ENCODE measurements at regions of chr2 and their contacts with region 1.

Region 1: DNA sequence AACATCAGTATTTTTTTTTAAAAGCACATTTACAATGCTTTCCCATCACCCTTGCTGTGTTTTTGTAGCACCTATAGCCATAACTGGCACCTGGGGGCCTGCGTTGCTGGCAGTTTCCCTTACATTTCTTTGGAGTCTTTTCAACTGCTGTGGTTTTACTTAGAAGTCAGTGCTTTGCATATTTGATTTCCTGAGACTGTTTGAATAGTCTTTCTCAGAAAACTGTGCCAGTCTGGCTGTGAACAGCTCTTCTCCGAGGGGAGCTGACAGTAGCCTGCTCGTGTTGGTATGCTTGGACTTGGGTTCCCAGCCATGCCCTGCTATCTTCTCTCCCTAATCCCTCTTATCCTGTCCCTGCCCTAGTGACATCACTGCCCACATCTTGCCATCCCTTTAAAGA is 81.5 kb downstream of the DPP4 start:
- DNase-seq: peak in 8 of 9 donors; percentile 52 to 78 (median 72)
- ATAC-seq: peak; percentile 86
- H3K4me3 ChIP-seq: peak overlapping the region; percentile 46
- H3K4me3 Mint-ChIP-seq: peak overlapping the region; percentile 80 to 91 (median 86)
- H3K27ac ChIP-seq: peak overlapping the region; percentile 68
- H3K27ac Mint-ChIP-seq: peak overlapping the region; percentile 91 to 100 (median 97)
- H3K4me1 ChIP-seq: peaks cover 26 to 51% of the 10 kb centered on the region in 2 donors
- H3K4me1 Mint-ChIP-seq: peaks cover 35 to 78% (median 66%) of the 10 kb centered on the region in 7 donors
- H3K27me3 ChIP-seq: no peaks in the 10 kb centered on the region
- H3K27me3 Mint-ChIP-seq: no peaks in the 10 kb centered on the region

Region 2: DNA sequence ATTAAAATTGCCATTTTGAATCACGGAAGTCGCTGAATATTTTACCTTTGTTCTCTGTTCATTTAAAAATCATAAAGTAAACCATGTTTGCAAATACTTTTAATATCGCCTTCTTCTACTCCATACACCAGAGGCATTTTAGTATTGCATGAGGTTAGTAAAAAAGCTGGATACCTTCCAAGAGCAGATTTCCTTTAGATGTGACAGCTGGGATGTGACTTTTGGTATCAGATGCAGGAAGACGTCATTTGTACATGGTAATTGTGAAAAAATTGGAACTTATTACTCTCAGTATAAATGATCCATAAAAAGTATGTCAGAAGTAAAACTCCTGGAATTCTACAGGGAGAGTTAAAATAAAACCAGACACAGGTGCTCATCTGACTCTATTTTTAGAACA is 278.8 kb before region 1 on chr2:
- CTCF ChIA-PET with region 1: no interaction called
- POLR2A ChIA-PET with region 1: no interaction called
- intact Hi-C with region 1: no loop called
- DNase-seq: no peak
- ATAC-seq: no peak
- H3K4me3 ChIP-seq: no peak overlapping the region
- H3K4me3 Mint-ChIP-seq: no peak overlapping the region
- H3K27ac ChIP-seq: no peak overlapping the region
- H3K27ac Mint-ChIP-seq: no peak overlapping the region
- H3K4me1 ChIP-seq: peaks cover 0 to under 1% of the 10 kb centered on the region in 2 donors
- H3K4me1 Mint-ChIP-seq: peaks cover 0 to 4% (median 3%) of the 10 kb centered on the region in 7 donors
- H3K27me3 ChIP-seq: no peaks in the 10 kb centered on the region
- H3K27me3 Mint-ChIP-seq: peaks cover 4 to 21% (median 6%) of the 10 kb centered on the region in 5 donors

Region 3: DNA sequence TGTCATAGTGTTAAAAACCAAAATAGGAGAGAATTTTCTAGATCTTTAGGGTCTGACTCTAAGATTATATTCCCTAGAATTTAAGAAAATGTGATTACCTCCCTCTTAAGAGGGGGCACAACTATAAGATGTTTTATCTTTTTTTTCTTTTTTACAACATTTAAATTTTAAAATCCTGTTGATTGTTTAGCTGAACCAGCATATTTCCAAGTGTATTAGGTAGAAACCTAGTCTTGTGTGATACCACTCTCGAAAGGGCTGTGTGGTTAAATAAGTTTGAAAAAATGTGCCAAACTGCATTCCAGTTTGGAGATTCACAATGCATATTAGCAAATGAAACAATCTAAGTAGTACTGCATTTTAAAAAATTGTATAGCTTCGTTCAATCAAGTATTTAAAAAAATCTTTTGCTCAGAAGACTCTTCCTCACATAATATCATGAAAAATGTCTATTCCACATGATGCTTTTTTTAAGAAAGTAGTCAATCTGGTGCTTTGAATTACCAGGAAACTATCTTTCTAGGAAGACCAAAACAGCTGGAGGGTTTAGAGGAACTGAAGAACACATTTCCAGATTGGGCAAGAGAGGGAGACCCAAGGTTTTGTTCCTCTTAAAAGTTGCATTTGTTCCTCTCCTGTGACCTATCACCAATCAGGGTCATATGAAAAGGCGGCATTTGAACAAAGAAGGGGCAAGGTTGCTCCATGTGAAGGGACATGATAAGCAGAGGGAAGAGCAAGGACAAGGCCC is 17.3 kb before region 1 on chr2:
- CTCF ChIA-PET with region 1: no interaction called
- POLR2A ChIA-PET with region 1: no interaction called
- intact Hi-C with region 1: loop called in 1 of 2 experiments (anchors 2 kb)
- DNase-seq: no peak
- ATAC-seq: no peak
- H3K4me3 ChIP-seq: no peak overlapping the region
- H3K4me3 Mint-ChIP-seq: peak overlapping the region in 1 of 10 donors; percentile 39
- H3K27ac ChIP-seq: no peak overlapping the region
- H3K27ac Mint-ChIP-seq: peak overlapping the region in 2 of 9 donors; percentile 27 to 88
- H3K4me1 ChIP-seq: peaks cover 4 to 7% of the 10 kb centered on the region in 2 donors
- H3K4me1 Mint-ChIP-seq: peaks cover 4 to 63% (median 13%) of the 10 kb centered on the region in 7 donors
- H3K27me3 ChIP-seq: no peaks in the 10 kb centered on the region
- H3K27me3 Mint-ChIP-seq: no peaks in the 10 kb centered on the region

Region 4: GRCh38 chr2:161981679-161982250 is 10.8 kb before region 1 on chr2:
- CTCF ChIA-PET with region 1: no interaction called
- POLR2A ChIA-PET with region 1: no interaction called
- intact Hi-C with region 1: loop called (anchors 1 to 2 kb)
- DNase-seq: no peak
- ATAC-seq: no peak
- H3K4me3 ChIP-seq: no peak overlapping the region
- H3K4me3 Mint-ChIP-seq: no peak overlapping the region
- H3K27ac ChIP-seq: no peak overlapping the region
- H3K27ac Mint-ChIP-seq: peak overlapping the region in 2 of 9 donors; percentile 43 to 79
- H3K4me1 ChIP-seq: peaks cover 4 to 7% of the 10 kb centered on the region in 2 donors
- H3K4me1 Mint-ChIP-seq: peaks cover 1 to 58% (median 5%) of the 10 kb centered on the region in 7 donors
- H3K27me3 ChIP-seq: no peaks in the 10 kb centered on the region
- H3K27me3 Mint-ChIP-seq: peaks cover 0 to 4% (median 0%) of the 10 kb centered on the region in 5 donors

Region 5: DNA sequence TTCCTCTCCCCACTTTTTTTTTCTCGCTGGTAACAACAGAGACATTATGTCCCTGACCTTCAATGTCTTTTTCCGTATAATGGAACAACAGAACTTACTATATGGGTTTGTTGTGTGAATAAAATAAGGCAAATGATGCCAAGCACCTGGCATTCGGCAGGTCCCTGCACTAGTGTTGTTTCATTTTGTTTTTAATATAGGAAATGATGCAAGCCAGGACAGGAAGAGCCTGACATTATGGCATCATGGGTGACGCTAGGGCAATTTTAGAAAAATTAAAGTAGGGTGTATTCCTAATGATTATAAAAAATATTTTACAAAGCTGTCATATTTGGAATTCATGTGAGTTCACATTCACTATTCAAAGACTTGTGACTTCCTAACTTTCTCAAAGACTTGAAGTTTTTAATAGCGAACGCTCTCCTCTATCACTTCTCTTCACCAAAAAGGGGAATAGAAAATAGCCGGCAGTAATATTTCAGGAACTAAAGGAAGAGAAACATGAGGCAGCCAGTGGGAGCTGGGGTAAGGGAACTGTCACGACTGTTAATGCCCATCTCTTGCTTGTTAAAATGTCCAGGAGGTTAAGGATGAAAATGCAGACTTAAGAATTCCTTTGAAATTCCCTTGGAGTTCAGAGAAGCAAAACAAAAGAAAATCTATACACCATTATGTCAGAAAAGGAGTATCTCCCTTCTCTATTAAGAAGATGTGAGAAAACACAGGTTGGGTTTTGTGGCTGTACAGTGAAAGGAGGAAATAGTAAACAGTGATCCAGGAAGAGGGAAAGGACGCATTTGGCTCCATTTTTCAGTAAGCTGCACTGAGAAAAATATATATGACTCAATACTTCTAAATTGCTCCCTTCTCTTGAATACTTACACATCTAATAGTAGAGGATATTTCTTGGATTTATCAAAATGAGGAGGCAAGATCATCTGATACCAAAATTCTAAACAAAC is 21.3 kb after region 1 on chr2:
- CTCF ChIA-PET with region 1: interaction called, 7 read pairs
- POLR2A ChIA-PET with region 1: interaction called, 16 read pairs
- intact Hi-C with region 1: loop called (anchors 1 kb)
- DNase-seq: peak in 7 of 9 donors; percentile 30 to 71 (median 55)
- ATAC-seq: peak; percentile 36
- H3K4me3 ChIP-seq: peak overlapping the region; percentile 11
- H3K4me3 Mint-ChIP-seq: peak overlapping the region; percentile 52 to 86 (median 70)
- H3K27ac ChIP-seq: peak overlapping the region; percentile 95
- H3K27ac Mint-ChIP-seq: peak overlapping the region; percentile 94 to 99 (median 98)
- H3K4me1 ChIP-seq: peaks cover 47 to 72% of the 10 kb centered on the region in 2 donors
- H3K4me1 Mint-ChIP-seq: peaks cover 41 to 86% (median 81%) of the 10 kb centered on the region in 7 donors
- H3K27me3 ChIP-seq: no peaks in the 10 kb centered on the region
- H3K27me3 Mint-ChIP-seq: no peaks in the 10 kb centered on the region

Region 6: DNA sequence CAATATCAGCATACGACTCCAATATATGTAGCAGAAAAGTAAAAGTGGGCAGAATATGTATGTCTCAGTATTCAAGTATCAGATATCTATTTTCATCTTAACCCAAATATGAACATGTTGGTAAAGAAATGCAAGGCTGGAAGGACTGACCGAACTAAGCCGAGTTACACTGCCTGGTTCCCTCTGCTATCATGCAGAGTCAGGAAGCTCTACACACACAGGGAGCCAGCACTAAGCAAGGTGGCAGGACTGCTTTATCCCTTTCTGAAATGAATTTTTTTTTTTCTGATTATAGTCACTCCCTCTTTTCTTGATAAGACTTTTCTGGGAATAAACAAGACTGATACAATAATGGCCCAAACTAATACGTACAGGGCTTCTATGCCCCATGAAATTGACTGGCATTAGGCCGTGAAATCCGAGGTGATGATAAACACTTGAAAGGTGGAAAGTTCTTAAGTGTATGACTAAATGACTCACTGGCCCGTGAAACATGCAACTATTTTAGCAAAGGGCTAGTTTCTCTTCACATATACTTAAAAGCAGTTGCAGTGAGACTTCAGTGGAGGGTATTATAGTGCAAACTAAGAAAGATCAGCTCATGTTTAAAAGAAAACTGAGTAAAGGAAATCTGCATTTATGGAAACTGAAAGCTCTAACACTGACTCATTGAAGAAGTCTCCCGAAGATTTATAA is 66.6 kb after region 1 on chr2:
- CTCF ChIA-PET with region 1: no interaction called
- POLR2A ChIA-PET with region 1: no interaction called
- intact Hi-C with region 1: loop called in 1 of 2 experiments (anchors 1 kb)
- DNase-seq: no peak
- ATAC-seq: peak; percentile 33
- H3K4me3 ChIP-seq: peak overlapping the region; percentile 48
- H3K4me3 Mint-ChIP-seq: peak overlapping the region; percentile 64 to 83 (median 76)
- H3K27ac ChIP-seq: peak overlapping the region; percentile 39
- H3K27ac Mint-ChIP-seq: peak overlapping the region; percentile 45 to 91 (median 84)
- H3K4me1 ChIP-seq: peaks cover 35 to 42% of the 10 kb centered on the region in 2 donors
- H3K4me1 Mint-ChIP-seq: peaks cover 32 to 92% (median 88%) of the 10 kb centered on the region in 7 donors
- H3K27me3 ChIP-seq: no peaks in the 10 kb centered on the region
- H3K27me3 Mint-ChIP-seq: no peaks in the 10 kb centered on the region

Region 7: DNA sequence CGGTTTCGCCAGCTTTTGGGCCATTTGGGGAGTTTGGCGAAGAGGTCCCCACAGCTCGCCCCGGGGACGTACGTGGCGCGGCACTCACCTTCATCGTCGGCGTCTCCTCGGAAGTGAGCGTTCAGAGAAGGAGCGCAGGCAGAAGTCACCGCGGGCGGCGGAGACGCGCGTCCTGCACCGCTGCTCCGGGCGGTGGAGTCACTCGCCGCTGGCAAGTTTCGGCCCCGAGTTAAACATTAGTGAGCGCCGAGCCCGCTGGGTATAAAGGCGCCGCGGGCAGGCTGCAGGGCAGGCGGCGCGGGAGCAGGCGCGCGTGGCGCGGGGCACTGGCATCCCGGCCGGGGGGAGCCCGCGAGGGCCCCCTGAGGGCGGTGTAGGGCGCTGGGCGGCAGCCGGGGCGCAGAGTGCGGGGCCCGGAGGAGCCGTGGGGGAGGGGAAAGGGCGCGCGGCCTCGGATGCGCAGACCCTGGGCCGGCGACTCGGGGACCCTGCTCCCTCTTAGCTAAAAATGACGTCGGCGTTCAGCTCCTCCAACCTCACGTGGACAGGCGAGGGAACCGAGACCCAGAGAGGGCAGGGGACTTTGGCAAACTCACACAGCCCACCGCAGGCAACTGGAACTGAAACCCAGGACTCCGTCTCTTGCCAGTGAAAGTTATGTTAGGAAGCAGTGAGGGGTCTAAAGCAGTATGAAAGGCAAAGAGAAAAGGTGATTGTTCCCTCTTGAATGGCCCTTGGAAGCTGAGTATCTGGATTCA is 81.5 kb after region 1 on chr2 and contains the start of gene DPP4:
- CTCF ChIA-PET with region 1: no interaction called
- POLR2A ChIA-PET with region 1: interaction called, 8 read pairs
- intact Hi-C with region 1: loop called (anchors 1 kb)
- DNase-seq: peak; percentile 31 to 68 (median 61)
- ATAC-seq: peak; percentile 88
- H3K4me3 ChIP-seq: peak within 1 kb of the TSS; percentile 95
- H3K4me3 Mint-ChIP-seq: peak within 1 kb of the TSS; percentile 92 to 100 (median 98)
- H3K27ac ChIP-seq: peak within 1 kb of the TSS; percentile 84
- H3K27ac Mint-ChIP-seq: peak within 1 kb of the TSS; percentile 86 to 98 (median 94)
- H3K4me1 ChIP-seq: peaks cover 0 to 28% of the 10 kb centered on the region in 2 donors
- H3K4me1 Mint-ChIP-seq: peaks cover 30 to 60% (median 52%) of the 10 kb centered on the region in 7 donors
- H3K27me3 ChIP-seq: no peaks in the 10 kb centered on the region
- H3K27me3 Mint-ChIP-seq: peaks cover 0 to 5% (median 0%) of the 10 kb centered on the region in 5 donors
- total RNA-seq, gene DPP4: 35.7 to 188 (median 41.6) TPM

Region 8: GRCh38 chr2:162301151-162301804 is 308.8 kb after region 1 on chr2:
- CTCF ChIA-PET with region 1: no interaction called
- POLR2A ChIA-PET with region 1: no interaction called
- intact Hi-C with region 1: loop called in 1 of 2 experiments (anchors 5 kb)
- DNase-seq: peak in 8 of 9 donors; percentile 26 to 57 (median 53)
- ATAC-seq: peak; percentile 91
- H3K4me3 ChIP-seq: no peak overlapping the region
- H3K4me3 Mint-ChIP-seq: no peak overlapping the region
- H3K27ac ChIP-seq: no peak overlapping the region
- H3K27ac Mint-ChIP-seq: peak overlapping the region in 1 of 9 donors; percentile 43
- H3K4me1 ChIP-seq: peaks cover 0 to 5% of the 10 kb centered on the region in 2 donors
- H3K4me1 Mint-ChIP-seq: peaks cover 0 to 7% (median 0%) of the 10 kb centered on the region in 7 donors
- H3K27me3 ChIP-seq: no peaks in the 10 kb centered on the region
- H3K27me3 Mint-ChIP-seq: no peaks in the 10 kb centered on the region